Calu3 (cell line): ENCODE measurements at regions of chr14 and their contacts with region 1.

Region 1: GRCh38 chr14:56004786-56005185 is 113.4 kb upstream of the PELI2 start:
- DNase-seq: peak; percentile 28
- H3K4me3 Mint-ChIP-seq: peak overlapping the region; percentile 66
- H3K27ac Mint-ChIP-seq: peak overlapping the region; percentile 88
- H3K4me1 Mint-ChIP-seq: peaks cover 26% of the 10 kb centered on the region
- H3K27me3 Mint-ChIP-seq: no peaks in the 10 kb centered on the region
- CTCF ChIP-seq: no peak

Region 2: DNA sequence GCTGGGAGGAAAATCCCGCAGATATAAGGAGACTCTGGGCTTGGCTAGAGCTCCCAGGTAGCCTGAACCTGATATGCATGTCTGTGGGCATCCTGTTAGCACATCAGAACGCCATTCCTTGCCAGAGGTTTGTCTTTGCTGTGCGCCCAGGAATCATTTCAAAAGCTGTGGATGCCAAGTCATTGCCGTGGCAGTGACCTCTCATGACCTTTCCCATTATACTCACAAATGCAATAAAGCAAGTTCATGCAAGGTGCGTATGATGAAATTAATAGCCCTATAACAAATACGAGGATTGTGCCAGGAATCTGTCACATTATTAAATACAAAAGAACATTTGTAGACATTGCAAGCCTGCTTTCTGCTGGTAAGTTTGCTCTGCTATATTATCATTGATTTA is 115.7 kb before region 1 on chr14:
- CTCF ChIA-PET with region 1: interaction called, 16 read pairs
- intact Hi-C with region 1: no loop called
- DNase-seq: peak; percentile 56
- H3K4me3 Mint-ChIP-seq: no peak overlapping the region
- H3K27ac Mint-ChIP-seq: no peak overlapping the region
- H3K4me1 Mint-ChIP-seq: peaks cover 10% of the 10 kb centered on the region
- H3K27me3 Mint-ChIP-seq: peaks cover 18% of the 10 kb centered on the region
- CTCF ChIP-seq: no peak